ENCODE measurements at regions of chr2 and their contacts with region 1.

Region 1: GRCh38 chr2:169599568-169599967 is 15.4 kb downstream of the PPIG start:
- DNase-seq: no peak
- ATAC-seq: no peak
- H3K4me3 ChIP-seq: no peak overlapping the region
- H3K4me3 Mint-ChIP-seq: no peak overlapping the region
- H3K27ac ChIP-seq: no peak overlapping the region
- H3K27ac Mint-ChIP-seq: no peak overlapping the region
- H3K4me1 ChIP-seq: peaks cover 11% of the 10 kb centered on the region
- H3K4me1 Mint-ChIP-seq: peaks cover 42% of the 10 kb centered on the region
- H3K27me3 ChIP-seq: no peaks in the 10 kb centered on the region
- H3K27me3 Mint-ChIP-seq: no peaks in the 10 kb centered on the region
- CTCF ChIP-seq: no peak

Region 2: GRCh38 chr2:169141713-169142352 is 457.7 kb before region 1 on chr2:
- CTCF ChIA-PET with region 1: no interaction called
- POLR2A ChIA-PET with region 1: no interaction called
- intact Hi-C with region 1: no loop called
- DNase-seq: peak; percentile 11 to 75 (median 66)
- ATAC-seq: peak; percentile 55
- H3K4me3 ChIP-seq: no peak overlapping the region
- H3K4me3 Mint-ChIP-seq: no peak overlapping the region
- H3K27ac ChIP-seq: no peak overlapping the region
- H3K27ac Mint-ChIP-seq: no peak overlapping the region
- H3K4me1 ChIP-seq: no peaks in the 10 kb centered on the region
- H3K4me1 Mint-ChIP-seq: no peaks in the 10 kb centered on the region
- H3K27me3 ChIP-seq: no peaks in the 10 kb centered on the region
- H3K27me3 Mint-ChIP-seq: no peaks in the 10 kb centered on the region
- CTCF ChIP-seq: peak; percentile 90

Region 3: GRCh38 chr2:169637620-169638019 is 38.1 kb after region 1 on chr2:
- CTCF ChIA-PET with region 1: no interaction called
- POLR2A ChIA-PET with region 1: no interaction called
- intact Hi-C with region 1: loop called in 1 of 2 experiments (anchors 5 kb)
- DNase-seq: no peak
- ATAC-seq: no peak
- H3K4me3 ChIP-seq: no peak overlapping the region
- H3K4me3 Mint-ChIP-seq: no peak overlapping the region
- H3K27ac ChIP-seq: no peak overlapping the region
- H3K27ac Mint-ChIP-seq: no peak overlapping the region
- H3K4me1 ChIP-seq: no peaks in the 10 kb centered on the region
- H3K4me1 Mint-ChIP-seq: no peaks in the 10 kb centered on the region
- H3K27me3 ChIP-seq: no peaks in the 10 kb centered on the region
- H3K27me3 Mint-ChIP-seq: no peaks in the 10 kb centered on the region
- CTCF ChIP-seq: no peak

Region 4: GRCh38 chr2:170394641-170395387 is 795.2 kb after region 1 on chr2:
- CTCF ChIA-PET with region 1: no interaction called
- POLR2A ChIA-PET with region 1: no interaction called
- intact Hi-C with region 1: no loop called
- DNase-seq: no peak
- ATAC-seq: no peak
- H3K4me3 ChIP-seq: no peak overlapping the region
- H3K4me3 Mint-ChIP-seq: no peak overlapping the region
- H3K27ac ChIP-seq: no peak overlapping the region
- H3K27ac Mint-ChIP-seq: no peak overlapping the region
- H3K4me1 ChIP-seq: no peaks in the 10 kb centered on the region
- H3K4me1 Mint-ChIP-seq: no peaks in the 10 kb centered on the region
- H3K27me3 ChIP-seq: peaks cover 0 to 3% of the 10 kb centered on the region in 2 experiments
- H3K27me3 Mint-ChIP-seq: peaks cover 30% of the 10 kb centered on the region
- CTCF ChIP-seq: no peak

Measured in CD8-positive, alpha-beta T cell (primary cell).